Activated CD4-positive, alpha-beta memory T cell treated with anti-CD3 and anti-CD28 coated beads for 36 hours (primary cell): ENCODE measurements at regions of chr1 and their contacts with region 1.

Region 1: DNA sequence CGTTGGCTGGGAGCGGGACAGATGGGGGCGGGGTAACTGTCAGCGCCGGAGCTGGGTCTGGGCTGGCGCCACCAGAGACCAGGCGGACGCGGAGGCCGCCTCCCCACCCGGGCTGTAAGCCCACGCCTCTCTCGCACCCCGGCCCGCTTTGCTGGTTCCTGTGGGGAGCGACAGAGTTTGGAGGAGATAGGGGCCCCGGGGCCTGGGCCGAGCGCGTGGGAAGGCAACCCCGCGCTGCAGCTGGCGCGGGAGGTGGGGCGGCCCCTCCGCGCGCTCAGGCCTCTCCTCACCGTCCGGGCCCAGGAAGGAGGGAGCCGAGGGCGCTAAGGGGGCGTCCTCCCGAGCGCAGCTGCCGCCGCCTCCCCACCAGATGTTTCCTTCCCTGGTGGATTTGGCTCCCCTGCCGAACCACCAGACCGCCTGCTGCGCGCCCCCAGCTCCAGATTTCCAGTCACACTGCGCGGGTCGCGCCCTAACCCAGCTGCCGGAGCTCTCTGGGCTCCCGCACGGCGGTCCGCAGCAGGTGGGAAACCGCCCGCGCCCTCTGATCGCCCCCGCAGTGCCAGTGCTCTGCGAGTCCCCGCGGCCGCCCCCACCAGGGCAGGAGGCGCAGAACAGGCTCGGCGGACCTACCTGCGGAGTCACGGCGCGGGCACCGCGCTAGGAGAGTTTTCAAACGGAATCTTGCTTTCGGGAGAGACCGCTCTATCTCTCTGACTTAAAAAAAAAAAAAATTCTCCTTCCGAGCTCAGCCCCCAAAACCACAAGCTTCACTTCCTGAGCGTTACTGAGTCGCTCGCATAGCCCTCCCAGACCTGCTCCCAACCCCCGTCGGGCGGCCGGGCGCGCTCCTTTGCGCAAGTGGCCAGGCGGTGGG is 1.1 kb downstream of the GFI1 start:
- DNase-seq: peak; percentile 93
- H3K4me3 Mint-ChIP-seq: peak overlapping the region; percentile 90
- H3K27ac Mint-ChIP-seq: peak overlapping the region; percentile 98
- H3K4me1 Mint-ChIP-seq: peaks cover 33% of the 10 kb centered on the region
- H3K27me3 Mint-ChIP-seq: no peaks in the 10 kb centered on the region

Region 2: GRCh38 chr1:92310185-92310597 is 175.4 kb before region 1 on chr1:
- CTCF ChIA-PET with region 1: interaction called, 21 read pairs
- POLR2A ChIA-PET with region 1: interaction called, 7 read pairs
- intact Hi-C with region 1: no loop called
- DNase-seq: no peak
- H3K4me3 Mint-ChIP-seq: no peak overlapping the region
- H3K27ac Mint-ChIP-seq: no peak overlapping the region
- H3K4me1 Mint-ChIP-seq: peaks cover 39% of the 10 kb centered on the region
- H3K27me3 Mint-ChIP-seq: no peaks in the 10 kb centered on the region

Region 3: GRCh38 chr1:92502247-92502646 is 16.6 kb after region 1 on chr1:
- CTCF ChIA-PET with region 1: interaction called, 4 read pairs
- POLR2A ChIA-PET with region 1: interaction called, 11 read pairs
- intact Hi-C with region 1: loop called (anchors 2 kb)
- DNase-seq: no peak
- H3K4me3 Mint-ChIP-seq: no peak overlapping the region
- H3K27ac Mint-ChIP-seq: peak overlapping the region; percentile 42
- H3K4me1 Mint-ChIP-seq: peaks cover 36% of the 10 kb centered on the region
- H3K27me3 Mint-ChIP-seq: no peaks in the 10 kb centered on the region

Region 4: DNA sequence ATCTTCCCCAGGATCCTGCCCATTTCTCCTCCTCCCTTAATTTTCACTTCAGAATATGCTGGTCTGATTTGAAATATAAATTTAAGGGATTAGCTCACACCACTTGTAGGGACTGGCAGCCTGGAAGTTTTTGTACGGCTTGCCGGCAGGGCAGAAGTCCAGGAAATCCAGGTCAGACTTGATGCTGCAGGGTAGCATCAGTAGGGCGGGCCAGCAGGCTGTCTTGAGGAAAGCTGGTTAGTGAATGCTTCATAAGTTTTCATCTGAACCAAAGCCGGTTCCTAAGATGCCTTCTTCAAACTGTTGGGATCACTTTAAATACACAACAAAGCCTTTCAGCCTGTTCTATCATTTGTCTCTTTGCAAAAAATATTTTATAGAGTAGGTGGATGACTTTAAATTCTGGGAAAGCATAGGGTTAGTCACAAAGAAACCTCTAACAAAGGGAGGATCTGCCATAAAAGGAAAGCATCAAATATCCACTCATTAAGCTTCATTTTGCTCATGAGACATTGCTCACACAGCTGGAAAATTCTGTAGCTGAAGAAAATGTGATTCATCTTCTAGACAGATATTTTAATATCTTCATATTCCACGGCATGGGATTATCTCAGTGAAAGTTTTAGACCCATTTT is 91.8 kb after region 1 on chr1:
- CTCF ChIA-PET with region 1: interaction called, 8 read pairs
- POLR2A ChIA-PET with region 1: interaction called, 105 read pairs
- intact Hi-C with region 1: loop called (anchors 2 kb)
- DNase-seq: peak; percentile 31
- H3K4me3 Mint-ChIP-seq: peak overlapping the region; percentile 93
- H3K27ac Mint-ChIP-seq: peak overlapping the region; percentile 96
- H3K4me1 Mint-ChIP-seq: peaks cover 54% of the 10 kb centered on the region
- H3K27me3 Mint-ChIP-seq: no peaks in the 10 kb centered on the region

Region 5: GRCh38 chr1:92583821-92584760 is 98.5 kb after region 1 on chr1:
- CTCF ChIA-PET with region 1: interaction called, 15 read pairs
- POLR2A ChIA-PET with region 1: interaction called, 35 read pairs
- intact Hi-C with region 1: loop called (anchors 1 kb)
- DNase-seq: no peak
- H3K4me3 Mint-ChIP-seq: peak overlapping the region; percentile 65
- H3K27ac Mint-ChIP-seq: peak overlapping the region; percentile 92
- H3K4me1 Mint-ChIP-seq: peaks cover 64% of the 10 kb centered on the region
- H3K27me3 Mint-ChIP-seq: no peaks in the 10 kb centered on the region

Region 6: GRCh38 chr1:92960395-92961130 is 474.9 kb after region 1 on chr1:
- CTCF ChIA-PET with region 1: no interaction called
- POLR2A ChIA-PET with region 1: no interaction called
- intact Hi-C with region 1: loop called (anchors 5 kb)
- DNase-seq: peak; percentile 75
- H3K4me3 Mint-ChIP-seq: peak overlapping the region; percentile 88
- H3K27ac Mint-ChIP-seq: peak overlapping the region; percentile 96
- H3K4me1 Mint-ChIP-seq: peaks cover 39% of the 10 kb centered on the region
- H3K27me3 Mint-ChIP-seq: no peaks in the 10 kb centered on the region